ENCODE measurements at regions of chr17 and their contacts with region 1.

Region 1: GRCh38 chr17:78497115-78497540 is 80.1 kb downstream of the DNAH17 start:
- DNase-seq: peak; percentile 57 to 85
- H3K4me3 ChIP-seq: no peak overlapping the region
- H3K27ac ChIP-seq: no peak overlapping the region
- H3K4me1 ChIP-seq: peaks cover 0 to 11% (median 9%) of the 10 kb centered on the region in 4 experiments; a peak in 6 of 7 replicates
- H3K27me3 ChIP-seq: no peaks in the 10 kb centered on the region; a peak in 2 of 7 replicates
- CTCF ChIP-seq: peak; percentile 80 to 95 (median 91)
- EP300 ChIP-seq: no peak
- POLR2A ChIP-seq: no peak
- RAD21 ChIP-seq: peak; percentile 99 to 100

Region 2: DNA sequence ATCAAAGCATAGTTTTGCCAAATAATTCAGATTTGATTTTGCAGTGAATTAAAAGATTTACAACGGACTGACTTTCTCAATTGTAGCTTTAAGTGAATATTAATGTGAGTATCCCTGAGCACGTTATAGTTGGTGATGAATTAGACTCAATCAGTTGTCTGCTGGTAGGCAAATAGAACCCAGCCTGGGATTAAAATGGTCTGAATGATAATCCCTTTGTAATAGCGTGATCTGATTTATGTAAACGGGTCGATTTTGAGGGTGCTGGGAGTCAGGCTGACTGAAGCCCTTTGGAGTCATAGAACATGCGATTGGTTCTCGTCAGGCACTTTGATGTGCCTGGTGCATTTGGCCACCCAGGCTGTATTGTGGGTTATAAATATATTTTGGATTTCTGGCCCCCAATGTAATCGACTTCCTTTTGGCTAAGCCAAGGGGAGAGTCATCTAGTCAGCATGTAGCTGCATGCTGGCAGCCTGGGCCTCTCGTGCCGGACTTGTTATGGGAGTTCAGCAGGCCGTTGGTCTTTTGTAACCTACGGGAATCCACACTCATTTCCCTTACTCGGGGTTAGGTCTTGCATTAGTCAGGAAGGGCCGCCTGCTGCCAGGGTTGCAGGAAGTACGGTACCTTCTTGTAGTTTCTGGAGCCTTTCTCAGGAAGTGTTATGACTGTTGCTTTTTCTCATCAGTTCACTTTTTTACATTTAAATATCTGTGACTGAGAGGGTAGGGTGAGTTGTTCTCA is 113.2 kb before region 1 on chr17:
- CTCF ChIA-PET with region 1: no interaction called
- POLR2A ChIA-PET with region 1: no interaction called
- DNase-seq: no peak
- H3K4me3 ChIP-seq: no peak overlapping the region
- H3K27ac ChIP-seq: no peak overlapping the region
- H3K4me1 ChIP-seq: peaks cover 11 to 25% (median 19%) of the 10 kb centered on the region in 4 experiments
- H3K27me3 ChIP-seq: no peaks in the 10 kb centered on the region
- CTCF ChIP-seq: no peak
- EP300 ChIP-seq: no peak
- POLR2A ChIP-seq: no peak
- RAD21 ChIP-seq: no peak

Region 3: DNA sequence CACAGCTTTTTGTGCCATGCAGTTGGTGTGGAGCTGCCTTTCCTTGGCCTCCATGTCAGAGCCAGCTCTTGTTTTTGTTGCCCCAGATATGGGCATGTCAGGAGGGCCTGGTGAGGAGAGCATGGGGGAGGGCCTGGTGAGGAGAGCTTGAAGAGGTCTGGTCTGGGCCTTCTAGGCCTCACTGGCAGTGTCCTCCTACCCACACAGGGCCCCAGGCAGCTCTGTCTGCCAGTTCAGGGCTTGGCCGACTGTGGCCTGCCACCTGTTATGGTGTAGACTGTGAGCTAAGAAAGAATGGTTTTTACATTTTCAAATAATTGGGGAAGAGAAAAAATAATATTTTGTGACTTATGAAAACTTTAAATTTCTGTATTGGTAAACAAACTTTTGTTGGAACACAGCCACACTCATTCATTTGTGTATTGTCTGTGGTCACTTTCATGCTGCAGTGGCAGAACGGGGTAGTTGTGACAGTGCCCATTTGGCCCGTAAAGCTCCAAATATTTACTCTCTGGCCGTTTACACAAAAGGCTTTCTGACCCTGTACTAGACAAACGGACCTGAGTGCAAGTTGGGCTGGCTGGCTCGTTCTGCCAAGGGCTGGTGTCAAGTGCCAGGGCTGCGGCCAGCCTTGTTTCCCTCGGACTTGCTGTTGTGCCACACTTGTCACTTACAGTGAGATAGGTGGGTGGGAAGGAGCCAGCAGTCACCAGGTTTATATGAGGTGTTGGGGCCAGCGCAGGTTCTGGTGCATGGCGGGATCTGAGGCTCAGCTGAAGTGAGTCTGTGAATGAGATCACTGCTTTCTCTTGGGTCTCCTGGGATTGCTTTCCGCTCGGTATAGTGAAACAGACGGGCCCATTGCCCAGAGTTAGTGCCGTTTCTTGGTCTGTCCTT is 100.4 kb before region 1 on chr17:
- CTCF ChIA-PET with region 1: no interaction called
- POLR2A ChIA-PET with region 1: no interaction called
- DNase-seq: no peak
- H3K4me3 ChIP-seq: no peak overlapping the region
- H3K27ac ChIP-seq: peak overlapping the region; percentile 59; the same call in 1 of the 2 replicates
- H3K4me1 ChIP-seq: no peaks in the 10 kb centered on the region; a peak in 1 of 7 replicates
- H3K27me3 ChIP-seq: no peaks in the 10 kb centered on the region
- CTCF ChIP-seq: no peak
- EP300 ChIP-seq: no peak
- POLR2A ChIP-seq: no peak
- RAD21 ChIP-seq: no peak

Region 4: GRCh38 chr17:78428836-78429617 is 68.1 kb before region 1 on chr17:
- CTCF ChIA-PET with region 1: no interaction called
- POLR2A ChIA-PET with region 1: no interaction called
- DNase-seq: no peak
- H3K4me3 ChIP-seq: no peak overlapping the region
- H3K27ac ChIP-seq: no peak overlapping the region
- H3K4me1 ChIP-seq: peaks cover 0 to 20% (median 11%) of the 10 kb centered on the region in 4 experiments; a peak in 6 of 7 replicates
- H3K27me3 ChIP-seq: no peaks in the 10 kb centered on the region
- CTCF ChIP-seq: no peak
- EP300 ChIP-seq: no peak
- POLR2A ChIP-seq: no peak
- RAD21 ChIP-seq: no peak

Region 5: GRCh38 chr17:78484300-78485246 is 12.6 kb before region 1 on chr17:
- CTCF ChIA-PET with region 1: interaction called, 16 read pairs
- POLR2A ChIA-PET with region 1: no interaction called
- DNase-seq: peak in 1 of 2 experiments; percentile 96
- H3K4me3 ChIP-seq: peak overlapping the region; percentile 53 to 74 (median 68)
- H3K27ac ChIP-seq: no peak overlapping the region
- H3K4me1 ChIP-seq: peaks cover 0 to 10% (median 8%) of the 10 kb centered on the region in 4 experiments; a peak in 5 of 7 replicates
- H3K27me3 ChIP-seq: peaks cover 0 to 3% (median 0%) of the 10 kb centered on the region in 4 experiments; a peak in 2 of 7 replicates
- CTCF ChIP-seq: no peak
- EP300 ChIP-seq: no peak
- POLR2A ChIP-seq: no peak
- RAD21 ChIP-seq: no peak

Region 6: GRCh38 chr17:78515480-78515879 is 18.4 kb after region 1 on chr17:
- CTCF ChIA-PET with region 1: interaction called, 10 read pairs
- POLR2A ChIA-PET with region 1: no interaction called
- DNase-seq: no peak
- H3K4me3 ChIP-seq: no peak overlapping the region
- H3K27ac ChIP-seq: no peak overlapping the region
- H3K4me1 ChIP-seq: no peaks in the 10 kb centered on the region
- H3K27me3 ChIP-seq: no peaks in the 10 kb centered on the region
- CTCF ChIP-seq: no peak
- EP300 ChIP-seq: no peak
- POLR2A ChIP-seq: no peak
- RAD21 ChIP-seq: no peak

Region 7: DNA sequence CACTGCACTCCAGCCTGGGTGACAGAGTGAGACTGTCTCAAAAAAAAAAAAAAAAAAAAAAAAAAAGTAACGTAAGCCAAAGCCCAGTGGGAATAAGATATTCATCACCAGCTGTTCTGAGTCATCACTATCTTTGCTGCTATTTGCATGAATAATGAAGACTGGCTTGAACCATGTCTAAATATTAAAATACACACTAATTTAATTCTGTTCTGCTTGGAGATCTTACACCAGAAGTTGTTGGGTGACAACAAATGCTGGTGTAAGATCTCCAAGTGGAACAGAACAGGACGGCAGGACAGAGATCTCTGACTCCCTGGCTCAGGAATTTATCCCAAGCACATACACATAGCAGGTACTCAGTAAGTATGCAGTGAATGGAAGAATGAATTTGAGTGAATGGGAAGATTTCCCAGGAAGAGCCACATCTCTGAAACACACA is 60.5 kb after region 1 on chr17:
- CTCF ChIA-PET with region 1: interaction called, 10 read pairs
- POLR2A ChIA-PET with region 1: interaction called, 3 read pairs
- DNase-seq: no peak
- H3K4me3 ChIP-seq: no peak overlapping the region
- H3K27ac ChIP-seq: no peak overlapping the region
- H3K4me1 ChIP-seq: no peaks in the 10 kb centered on the region
- H3K27me3 ChIP-seq: no peaks in the 10 kb centered on the region
- CTCF ChIP-seq: no peak
- EP300 ChIP-seq: no peak
- POLR2A ChIP-seq: no peak
- RAD21 ChIP-seq: no peak

Region 8: GRCh38 chr17:78611607-78612006 is 114.5 kb after region 1 on chr17:
- CTCF ChIA-PET with region 1: interaction called, 46 read pairs
- POLR2A ChIA-PET with region 1: no interaction called
- DNase-seq: no peak
- H3K4me3 ChIP-seq: no peak overlapping the region
- H3K27ac ChIP-seq: no peak overlapping the region
- H3K4me1 ChIP-seq: peaks cover 0 to 6% (median 0%) of the 10 kb centered on the region in 4 experiments; a peak in 2 of 7 replicates
- H3K27me3 ChIP-seq: peaks cover 0 to 10% (median 8%) of the 10 kb centered on the region in 4 experiments; a peak in 5 of 7 replicates
- CTCF ChIP-seq: no peak
- EP300 ChIP-seq: no peak
- POLR2A ChIP-seq: no peak
- RAD21 ChIP-seq: no peak

Region 9: GRCh38 chr17:78716814-78717393 is 219.8 kb after region 1 on chr17:
- CTCF ChIA-PET with region 1: interaction called, 92 read pairs
- POLR2A ChIA-PET with region 1: interaction called, 4 read pairs
- DNase-seq: peak in 1 of 2 experiments; percentile 55
- H3K4me3 ChIP-seq: peak overlapping the region in 1 of 4 experiments; percentile 31; a peak in 1 of 8 replicates
- H3K27ac ChIP-seq: no peak overlapping the region
- H3K4me1 ChIP-seq: peaks cover 0 to 17% (median 12%) of the 10 kb centered on the region in 4 experiments; a peak in 6 of 7 replicates
- H3K27me3 ChIP-seq: no peaks in the 10 kb centered on the region
- CTCF ChIP-seq: no peak
- EP300 ChIP-seq: no peak
- POLR2A ChIP-seq: no peak
- RAD21 ChIP-seq: no peak

Region 10: DNA sequence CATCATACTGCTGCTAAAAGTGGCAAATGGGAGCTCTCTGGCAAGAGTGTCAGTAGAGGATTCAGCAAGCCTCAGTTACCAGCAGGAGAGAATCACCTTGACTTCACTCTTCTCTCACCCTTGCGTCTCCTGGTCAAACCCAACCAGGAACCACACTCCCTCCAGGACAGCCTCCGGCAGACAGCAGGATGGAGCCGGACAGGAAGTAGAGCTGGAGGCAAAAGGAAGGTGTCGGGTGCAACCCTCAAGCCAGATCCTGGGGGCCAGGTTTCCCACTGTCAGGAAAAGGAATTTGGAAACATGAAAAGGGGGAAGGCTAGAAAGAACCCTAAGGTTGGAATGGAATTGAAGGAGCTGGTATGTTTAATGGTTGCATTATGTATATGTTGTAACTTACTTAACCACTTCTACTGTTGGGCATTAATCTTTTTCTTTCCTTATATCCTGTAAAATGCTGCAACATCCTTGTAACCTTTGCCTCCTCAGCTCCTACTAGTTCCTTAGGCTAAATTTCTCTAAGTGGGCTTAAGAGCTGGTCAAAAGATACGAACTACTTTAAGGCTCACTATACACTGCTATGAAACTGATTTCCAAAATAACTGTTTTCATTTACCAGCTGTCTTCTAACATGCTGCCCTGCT is 244.6 kb after region 1 on chr17:
- CTCF ChIA-PET with region 1: interaction called, 12 read pairs
- POLR2A ChIA-PET with region 1: no interaction called
- DNase-seq: no peak
- H3K4me3 ChIP-seq: no peak overlapping the region
- H3K27ac ChIP-seq: no peak overlapping the region
- H3K4me1 ChIP-seq: peaks cover 0 to 10% (median 2%) of the 10 kb centered on the region in 4 experiments; a peak in 2 of 7 replicates
- H3K27me3 ChIP-seq: no peaks in the 10 kb centered on the region
- CTCF ChIP-seq: no peak
- EP300 ChIP-seq: no peak
- POLR2A ChIP-seq: no peak
- RAD21 ChIP-seq: no peak

Measured in H1 (cell line).